Activated CD4-positive, alpha-beta memory T cell treated with anti-CD3 and anti-CD28 coated beads, Interleukin-2, amount 10 ng/mL, durations not matched to agents 7 days and 5 days (primary cell): ENCODE measurements at regions of chr5 and their contacts with region 1.

Region 1: DNA sequence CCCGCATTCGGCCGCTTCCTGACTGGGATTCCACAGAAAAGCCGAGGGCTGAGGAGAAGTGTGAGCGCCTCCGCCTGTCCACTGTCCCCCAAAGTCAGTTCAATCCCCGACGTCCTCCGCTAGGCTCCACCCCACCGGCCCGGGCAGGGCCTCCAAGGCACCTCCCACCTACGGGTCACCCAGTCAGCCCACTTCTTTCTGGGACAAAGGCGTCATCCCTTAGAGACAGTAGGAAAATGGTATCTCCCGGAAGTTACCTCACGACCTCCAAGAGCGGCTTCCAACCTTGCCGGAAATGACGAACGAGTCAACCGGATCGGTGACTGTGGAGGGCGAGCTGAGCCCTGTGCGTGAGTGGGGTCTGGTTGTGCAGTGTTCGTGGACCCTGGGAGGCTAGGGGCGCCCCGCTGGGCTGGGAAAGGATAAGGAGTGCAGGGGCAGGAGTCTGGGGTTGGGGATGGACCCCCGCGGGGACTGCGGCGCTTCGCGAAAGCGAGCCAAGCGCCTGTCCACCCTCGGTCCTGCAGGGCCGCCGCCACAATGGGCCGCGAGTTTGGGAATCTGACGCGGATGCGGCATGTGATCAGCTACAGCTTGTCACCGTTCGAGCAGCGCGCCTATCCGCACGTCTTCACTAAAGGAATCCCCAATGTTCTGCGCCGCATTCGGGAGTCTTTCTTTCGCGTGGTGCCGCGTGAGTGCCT is at the starts of genes GDF9 and UQCRQ:
- DNase-seq: peak; percentile 93
- H3K4me3 Mint-ChIP-seq: peak within 1 kb of the TSS; percentile 96
- H3K27ac Mint-ChIP-seq: peak within 1 kb of the TSS; percentile 94
- H3K4me1 Mint-ChIP-seq: peaks cover 31% of the 10 kb centered on the region
- H3K27me3 Mint-ChIP-seq: no peaks in the 10 kb centered on the region
- total RNA-seq, gene GDF9: 0.68 to 1.2 TPM
- total RNA-seq, gene UQCRQ: 281 to 293 TPM

Region 2: GRCh38 chr5:132736853-132737833 is 129.4 kb before region 1 on chr5 and contains the start of gene KIF3A:
- CTCF ChIA-PET with region 1: no interaction called
- POLR2A ChIA-PET with region 1: interaction called, 10 read pairs
- DNase-seq: peak; percentile 99
- H3K4me3 Mint-ChIP-seq: peak within 1 kb of the TSS; percentile 86
- H3K27ac Mint-ChIP-seq: peak within 1 kb of the TSS; percentile 74
- H3K4me1 Mint-ChIP-seq: peaks cover 43% of the 10 kb centered on the region
- H3K27me3 Mint-ChIP-seq: peaks cover 7% of the 10 kb centered on the region
- total RNA-seq, gene KIF3A: 16.2 to 19.3 TPM

Region 3: GRCh38 chr5:132777209-132778069 is 89.1 kb before region 1 on chr5 and contains the start of gene SEPTIN8:
- CTCF ChIA-PET with region 1: no interaction called
- POLR2A ChIA-PET with region 1: no interaction called
- DNase-seq: peak; percentile 55
- H3K4me3 Mint-ChIP-seq: peak within 1 kb of the TSS; percentile 73
- H3K27ac Mint-ChIP-seq: no peak within 1 kb of the TSS
- H3K4me1 Mint-ChIP-seq: peaks cover 23% of the 10 kb centered on the region
- H3K27me3 Mint-ChIP-seq: peaks cover 38% of the 10 kb centered on the region
- total RNA-seq, gene SEPTIN8: 29.7 to 31.8 TPM

Region 4: GRCh38 chr5:132807163-132807838 is 59.2 kb before region 1 on chr5:
- CTCF ChIA-PET with region 1: no interaction called
- POLR2A ChIA-PET with region 1: no interaction called
- DNase-seq: no peak
- H3K4me3 Mint-ChIP-seq: no peak overlapping the region
- H3K27ac Mint-ChIP-seq: no peak overlapping the region
- H3K4me1 Mint-ChIP-seq: peaks cover 2% of the 10 kb centered on the region
- H3K27me3 Mint-ChIP-seq: peaks cover 60% of the 10 kb centered on the region

Region 5: GRCh38 chr5:132877938-132878337 is 11.4 kb after region 1 on chr5:
- CTCF ChIA-PET with region 1: interaction called, 8 read pairs
- POLR2A ChIA-PET with region 1: interaction called, 14 read pairs
- DNase-seq: no peak
- H3K4me3 Mint-ChIP-seq: no peak overlapping the region
- H3K27ac Mint-ChIP-seq: no peak overlapping the region
- H3K4me1 Mint-ChIP-seq: no peaks in the 10 kb centered on the region
- H3K27me3 Mint-ChIP-seq: no peaks in the 10 kb centered on the region

Region 6: DNA sequence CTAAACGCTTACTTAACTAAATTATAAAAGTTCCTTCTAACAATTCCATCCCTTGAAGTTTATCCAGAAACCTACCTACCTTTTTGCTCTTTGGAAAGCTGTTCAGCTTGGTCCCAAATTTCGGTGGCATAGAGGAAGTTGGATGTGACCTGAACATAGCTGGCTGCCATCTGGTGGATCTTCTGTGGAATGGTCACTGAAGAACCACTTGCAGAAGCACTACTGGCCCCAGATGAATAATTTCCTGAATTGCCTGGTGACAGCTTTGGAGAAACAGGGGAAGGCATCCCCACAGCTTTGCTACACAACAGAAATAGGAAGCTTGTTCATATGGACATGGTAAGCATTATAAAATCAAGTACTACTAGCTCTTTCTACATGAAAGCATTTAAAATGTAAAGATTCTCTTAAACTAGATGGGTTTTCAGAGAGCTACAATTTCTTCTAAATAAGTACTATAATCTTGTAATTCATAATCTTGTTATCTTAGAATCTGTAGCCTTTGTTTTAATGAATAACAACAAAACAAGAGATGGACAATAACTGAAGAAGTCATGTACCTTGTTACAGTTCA is 16.9 kb after region 1 on chr5:
- CTCF ChIA-PET with region 1: interaction called, 8 read pairs
- POLR2A ChIA-PET with region 1: interaction called, 14 read pairs
- DNase-seq: peak; percentile 29
- H3K4me3 Mint-ChIP-seq: no peak overlapping the region
- H3K27ac Mint-ChIP-seq: peak overlapping the region; percentile 37
- H3K4me1 Mint-ChIP-seq: peaks cover 10% of the 10 kb centered on the region
- H3K27me3 Mint-ChIP-seq: no peaks in the 10 kb centered on the region

Region 7: GRCh38 chr5:132963175-132964104 is 96.9 kb after region 1 on chr5 and contains the start of gene AFF4:
- CTCF ChIA-PET with region 1: no interaction called
- POLR2A ChIA-PET with region 1: interaction called, 24 read pairs
- DNase-seq: peak; percentile 90
- H3K4me3 Mint-ChIP-seq: peak within 1 kb of the TSS; percentile 98
- H3K27ac Mint-ChIP-seq: peak within 1 kb of the TSS; percentile 94
- H3K4me1 Mint-ChIP-seq: peaks cover 27% of the 10 kb centered on the region
- H3K27me3 Mint-ChIP-seq: no peaks in the 10 kb centered on the region
- total RNA-seq, gene AFF4: 33.1 to 33.3 TPM

Region 8: DNA sequence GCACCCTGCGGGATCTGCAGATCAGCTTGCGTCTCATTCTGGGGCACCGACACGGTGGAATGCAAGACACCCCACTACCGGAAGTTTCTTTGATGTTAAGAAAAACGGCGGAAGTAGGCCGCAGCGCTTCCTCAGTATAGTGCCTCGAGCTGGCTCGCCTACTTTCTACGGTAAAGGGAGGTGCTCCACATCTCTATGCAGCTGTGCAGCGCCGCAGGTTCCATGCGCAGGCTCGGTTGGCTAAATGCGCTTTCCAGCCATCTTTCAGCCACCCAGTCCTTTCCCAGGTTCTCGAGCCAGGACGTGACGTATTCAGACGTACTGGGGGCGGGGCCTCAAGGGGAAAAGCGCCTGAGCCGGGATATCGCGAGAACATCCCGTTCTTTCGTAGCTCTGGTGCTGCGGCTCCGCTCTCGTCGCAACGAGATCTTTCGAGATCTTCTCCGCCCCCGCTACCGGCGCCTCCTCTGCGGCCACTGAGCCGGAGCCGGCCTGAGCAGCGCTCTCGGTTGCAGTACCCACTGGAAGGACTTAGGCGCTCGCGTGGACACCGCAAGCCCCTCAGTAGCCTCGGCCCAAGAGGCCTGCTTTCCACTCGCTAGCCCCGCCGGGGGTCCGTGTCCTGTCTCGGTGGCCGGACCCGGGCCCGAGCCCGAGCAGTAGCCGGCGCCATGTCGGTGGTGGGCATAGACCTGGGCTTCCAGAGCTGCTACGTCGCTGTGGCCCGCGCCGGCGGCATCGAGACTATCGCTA is 185.3 kb after region 1 on chr5 and contains the start of gene HSPA4:
- CTCF ChIA-PET with region 1: no interaction called
- POLR2A ChIA-PET with region 1: interaction called, 25 read pairs
- DNase-seq: peak; percentile 98
- H3K4me3 Mint-ChIP-seq: peak within 1 kb of the TSS; percentile 97
- H3K27ac Mint-ChIP-seq: peak within 1 kb of the TSS; percentile 100
- H3K4me1 Mint-ChIP-seq: peaks cover 50% of the 10 kb centered on the region
- H3K27me3 Mint-ChIP-seq: no peaks in the 10 kb centered on the region
- total RNA-seq, gene HSPA4: 88.2 to 94.6 TPM